ENCODE measurements at regions of chr10 and their contacts with region 1.

Region 1: DNA sequence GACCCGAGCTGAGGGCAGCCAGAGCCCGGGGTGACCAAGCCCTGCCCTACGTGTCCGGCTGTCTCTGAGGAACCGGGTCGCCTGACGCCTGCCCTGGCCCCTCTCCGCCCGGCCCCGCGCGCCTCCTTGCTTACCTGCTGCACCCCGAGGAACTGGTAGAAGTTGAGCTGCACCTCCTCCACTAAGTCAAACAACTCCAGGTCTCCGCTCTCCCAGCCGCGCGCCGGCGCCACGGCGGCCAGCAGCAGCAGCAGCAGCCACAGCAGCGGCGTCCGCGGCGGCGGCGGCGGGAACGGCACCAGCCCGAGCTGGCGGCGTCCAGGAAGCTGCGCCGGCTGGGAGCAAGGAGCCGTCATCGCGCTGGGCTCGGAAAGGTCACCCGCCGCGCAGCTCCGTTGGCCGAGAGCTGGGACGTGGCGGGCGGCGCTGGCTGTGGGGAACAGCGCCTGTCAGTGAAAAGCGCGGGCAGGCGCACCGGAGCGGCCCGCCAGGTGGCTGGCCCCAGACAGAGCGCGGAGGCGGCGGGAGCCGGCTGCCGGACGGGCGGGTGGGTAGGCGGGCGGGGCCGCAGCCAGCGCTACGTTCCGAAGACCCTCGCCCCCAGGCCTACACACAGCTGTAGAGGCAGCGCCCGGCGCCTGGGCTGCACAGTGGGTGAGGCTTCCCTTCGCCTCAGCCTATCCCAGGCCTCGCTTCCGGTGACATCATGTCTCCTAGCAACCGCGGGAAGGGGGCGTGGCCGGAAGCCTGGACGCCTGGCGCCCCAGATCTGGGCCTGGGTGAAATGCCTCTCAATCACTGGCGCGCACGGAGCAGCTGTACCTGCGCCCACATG is at the start of gene DNAJC1:
- DNase-seq: peak; percentile 98
- H3K4me3 ChIP-seq: peak within 1 kb of the TSS; percentile 73 to 91 (median 86)
- H3K27ac ChIP-seq: peak within 1 kb of the TSS; percentile 94 to 97 (median 97)
- H3K4me1 ChIP-seq: peaks cover 0 to 28% (median 19%) of the 10 kb centered on the region in 4 donors
- H3K27me3 ChIP-seq: no peaks in the 10 kb centered on the region
- CTCF ChIP-seq: no peak
- EP300 ChIP-seq: no peak
- POLR2A ChIP-seq: peak; percentile 68 to 69
- total RNA-seq, gene DNAJC1: 51.9 to 135 (median 74.3) TPM

Region 2: DNA sequence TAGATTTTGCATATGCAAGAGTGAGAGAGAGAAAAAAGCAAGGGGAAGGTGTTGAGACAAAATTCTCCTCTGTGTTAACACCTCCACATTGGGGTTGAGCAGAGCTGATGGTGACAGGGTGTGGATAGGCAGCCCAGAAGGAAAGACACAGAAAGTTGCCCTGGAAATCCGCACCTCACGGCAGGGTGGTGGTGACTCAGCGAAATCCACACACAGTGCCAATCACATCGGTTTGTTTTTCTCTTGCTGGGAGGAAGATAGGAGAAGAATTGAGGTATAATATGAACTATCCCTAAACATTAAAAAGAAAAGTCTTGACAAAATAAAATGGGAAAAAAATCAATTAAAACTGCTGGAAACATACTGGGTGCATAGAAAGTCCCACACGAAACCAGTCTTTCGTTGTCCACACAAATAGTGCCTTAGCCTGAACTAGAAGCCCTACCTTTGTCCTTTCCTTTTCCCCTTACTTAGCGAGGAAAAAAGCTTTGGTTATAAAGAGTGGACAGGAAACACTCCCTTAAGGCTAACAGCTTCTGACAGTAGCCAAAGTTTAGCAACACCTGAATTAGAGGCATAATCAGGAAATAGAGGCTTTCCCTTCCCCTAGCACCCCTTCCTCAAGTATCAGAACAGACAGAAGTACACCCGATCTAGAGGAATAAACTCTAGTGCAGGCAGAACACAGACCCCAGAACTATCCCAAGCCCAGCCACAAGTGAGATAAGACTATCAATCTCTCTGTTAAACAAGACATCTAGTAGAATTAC is 39.4 kb after region 1 on chr10:
- intact Hi-C with region 1: no loop called
- DNase-seq: no peak
- H3K4me3 ChIP-seq: no peak overlapping the region
- H3K27ac ChIP-seq: no peak overlapping the region
- H3K4me1 ChIP-seq: no peaks in the 10 kb centered on the region
- H3K27me3 ChIP-seq: no peaks in the 10 kb centered on the region
- CTCF ChIP-seq: no peak
- EP300 ChIP-seq: no peak
- POLR2A ChIP-seq: no peak

Region 3: DNA sequence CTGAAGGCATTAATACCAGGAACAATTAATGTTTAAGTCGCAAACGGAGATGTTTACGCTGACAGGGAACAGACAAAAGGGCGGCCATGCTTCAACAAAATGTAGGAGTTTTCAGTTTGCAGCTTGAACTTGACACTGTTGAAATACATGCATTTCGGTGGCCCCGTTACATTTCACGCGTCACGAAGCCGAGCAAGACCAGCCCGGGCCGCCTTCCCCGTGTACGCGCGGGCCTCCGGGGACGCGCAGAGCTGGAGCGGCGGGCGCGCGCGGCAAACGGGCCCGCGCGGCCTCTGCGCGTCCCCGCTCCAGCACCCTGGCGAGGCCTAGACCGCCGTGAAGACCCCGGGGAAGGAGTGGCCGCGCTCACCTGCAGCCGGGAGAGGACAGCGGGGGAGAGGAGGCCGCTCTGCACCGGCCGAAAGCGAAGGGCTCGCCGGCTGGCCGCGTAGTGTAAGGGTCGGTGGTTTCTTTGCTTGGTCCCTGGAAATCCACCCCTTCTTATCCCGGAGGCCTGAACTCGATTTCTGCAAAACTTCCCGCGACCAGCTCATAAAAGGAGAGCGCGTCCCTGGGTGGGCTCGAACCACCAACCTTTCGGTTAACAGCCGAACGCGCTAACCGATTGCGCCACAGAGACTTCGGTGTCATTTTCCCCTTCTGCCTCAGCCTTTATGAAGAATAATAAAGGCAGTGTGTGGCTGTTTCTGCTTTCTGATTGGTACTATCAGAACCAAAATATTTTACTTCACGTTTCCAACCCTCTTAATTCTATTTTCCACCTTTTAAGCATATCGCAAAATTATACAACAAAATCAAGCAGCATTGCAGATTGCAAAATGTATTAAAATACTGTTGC is 225.9 kb after region 1 on chr10:
- intact Hi-C with region 1: loop called (anchors 1 kb)
- DNase-seq: peak; percentile 93
- H3K4me3 ChIP-seq: peak overlapping the region; percentile 60 to 79 (median 75)
- H3K27ac ChIP-seq: peak overlapping the region; percentile 93 to 96 (median 96)
- H3K4me1 ChIP-seq: peaks cover 0 to 12% (median 7%) of the 10 kb centered on the region in 4 donors
- H3K27me3 ChIP-seq: no peaks in the 10 kb centered on the region
- CTCF ChIP-seq: no peak
- EP300 ChIP-seq: no peak
- POLR2A ChIP-seq: no peak

Region 4: DNA sequence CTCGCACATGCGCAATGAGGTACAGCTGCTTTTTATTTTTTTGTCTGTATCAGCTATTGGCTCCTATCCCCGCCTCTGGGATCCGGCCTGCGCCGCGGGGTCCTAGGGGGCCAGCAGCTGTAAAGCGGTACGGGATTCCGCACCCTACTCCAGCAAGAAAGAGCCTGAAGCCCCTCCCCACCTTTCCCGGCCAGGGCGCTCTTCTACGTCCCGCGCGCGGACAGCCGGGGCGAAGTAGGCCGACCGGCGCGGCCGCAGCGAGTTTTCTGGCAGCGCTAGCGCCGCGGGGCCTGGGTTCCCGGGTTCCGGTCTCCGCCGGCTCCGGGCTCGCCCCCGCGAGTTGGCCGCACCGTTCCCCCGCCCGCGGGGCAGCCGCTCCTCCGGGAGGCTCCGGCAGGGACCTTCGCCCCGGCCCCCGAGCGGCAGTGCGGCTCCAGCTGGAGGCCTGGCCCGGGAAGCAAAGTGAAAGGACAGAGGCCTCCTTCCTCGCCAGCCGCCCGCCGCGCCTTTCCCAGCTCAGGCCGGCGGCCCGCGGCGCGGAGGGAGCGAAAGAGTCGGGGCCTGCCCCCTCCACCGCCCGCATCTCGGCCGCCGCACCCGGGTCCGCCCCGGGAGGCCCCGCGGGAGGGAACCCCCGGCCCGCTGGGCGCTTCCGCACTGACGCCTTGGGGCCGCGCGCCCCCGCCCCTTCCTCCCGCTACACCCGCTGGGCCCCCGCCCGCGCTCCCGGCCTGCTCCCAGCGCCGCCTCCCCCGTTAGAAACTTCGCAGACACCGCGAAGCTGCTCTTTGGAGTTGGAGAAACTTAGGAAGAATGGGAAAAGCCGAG is 337.3 kb after region 1 on chr10:
- intact Hi-C with region 1: loop called (anchors 5 kb)
- DNase-seq: peak; percentile 82
- H3K4me3 ChIP-seq: peak overlapping the region; percentile 53 to 84 (median 72)
- H3K27ac ChIP-seq: peak overlapping the region; percentile 91 to 98 (median 96)
- H3K4me1 ChIP-seq: peaks cover 0 to 35% (median 30%) of the 10 kb centered on the region in 4 donors
- H3K27me3 ChIP-seq: peaks cover 75 to 89% (median 79%) of the 10 kb centered on the region in 3 donors
- CTCF ChIP-seq: no peak
- EP300 ChIP-seq: no peak
- POLR2A ChIP-seq: peak; percentile 34 to 37

Region 5: GRCh38 chr10:22714479-22715289 is 711.4 kb after region 1 on chr10 and contains the start of gene PIP4K2A:
- intact Hi-C with region 1: loop called (anchors 10 kb)
- DNase-seq: peak; percentile 84
- H3K4me3 ChIP-seq: peak within 1 kb of the TSS; percentile 61 to 99 (median 90)
- H3K27ac ChIP-seq: peak within 1 kb of the TSS; percentile 86 to 91 (median 88)
- H3K4me1 ChIP-seq: peaks cover 0 to 36% (median 18%) of the 10 kb centered on the region in 4 donors
- H3K27me3 ChIP-seq: no peaks in the 10 kb centered on the region
- CTCF ChIP-seq: no peak
- EP300 ChIP-seq: no peak
- POLR2A ChIP-seq: no peak
- total RNA-seq, gene PIP4K2A: 16.6 to 23.2 (median 20.4) TPM

Region 6: GRCh38 chr10:23095404-23095965 is 1092.2 kb after region 1 on chr10 and contains the start of gene MSRB2:
- intact Hi-C with region 1: loop called (anchors 10 kb)
- DNase-seq: peak; percentile 98
- H3K4me3 ChIP-seq: peak within 1 kb of the TSS; percentile 62 to 95 (median 79)
- H3K27ac ChIP-seq: peak within 1 kb of the TSS; percentile 90 to 99 (median 96)
- H3K4me1 ChIP-seq: peaks cover 0 to 17% (median 12%) of the 10 kb centered on the region in 4 donors
- H3K27me3 ChIP-seq: no peaks in the 10 kb centered on the region
- CTCF ChIP-seq: no peak
- EP300 ChIP-seq: no peak
- POLR2A ChIP-seq: peak; percentile 45 to 55
- total RNA-seq, gene MSRB2: 32.7 to 56.3 (median 47.0) TPM